ENCODE measurements at regions of chr2 and their contacts with region 1.

Region 1: DNA sequence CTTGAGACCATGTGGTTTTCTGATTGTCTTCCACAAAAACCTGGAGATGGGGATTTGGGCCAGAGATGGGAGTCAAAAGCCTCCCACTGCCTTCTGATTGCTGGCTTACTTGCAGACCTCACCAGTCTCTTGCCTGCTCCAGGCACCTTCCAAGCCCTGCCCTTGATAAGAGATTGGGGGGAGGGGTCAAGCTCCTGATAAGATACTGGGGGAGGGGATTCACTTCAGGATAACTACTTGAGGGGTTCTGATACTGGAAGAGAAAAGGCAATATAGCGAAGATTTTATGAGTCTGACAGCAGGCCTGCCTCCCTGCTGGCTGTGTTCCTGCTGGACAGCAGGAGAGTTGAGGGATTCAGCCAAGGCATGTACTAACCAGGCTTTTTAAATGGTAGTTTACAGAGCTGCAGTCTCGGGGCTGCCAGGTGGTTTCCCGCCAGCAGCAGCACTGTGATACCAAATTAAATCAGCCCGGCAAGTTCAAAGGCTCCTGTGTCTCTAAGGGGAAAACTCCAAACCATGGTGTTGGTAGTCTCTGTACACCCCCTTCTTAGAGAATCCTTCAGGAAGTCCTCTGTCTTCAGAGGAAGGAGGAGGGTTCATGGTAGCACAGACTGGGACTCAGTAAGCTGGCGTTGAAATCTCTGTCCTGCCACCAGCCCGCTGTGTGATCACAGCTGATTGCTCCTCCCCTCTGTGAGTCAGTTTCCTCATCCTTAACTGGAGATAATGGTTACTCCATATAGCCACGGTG is 58.3 kb downstream of the FBXO36 start:
- DNase-seq: no peak
- H3K4me3 ChIP-seq: peak overlapping the region; percentile 7 to 31 (median 21)
- H3K27ac ChIP-seq: peak overlapping the region; percentile 58 to 72 (median 66)
- H3K4me1 ChIP-seq: peaks cover 5 to 22% (median 18%) of the 10 kb centered on the region in 4 donors
- H3K27me3 ChIP-seq: no peaks in the 10 kb centered on the region
- CTCF ChIP-seq: peak in 1 of 3 experiments; percentile 5
- EP300 ChIP-seq: no peak
- POLR2A ChIP-seq: no peak

Region 2: DNA sequence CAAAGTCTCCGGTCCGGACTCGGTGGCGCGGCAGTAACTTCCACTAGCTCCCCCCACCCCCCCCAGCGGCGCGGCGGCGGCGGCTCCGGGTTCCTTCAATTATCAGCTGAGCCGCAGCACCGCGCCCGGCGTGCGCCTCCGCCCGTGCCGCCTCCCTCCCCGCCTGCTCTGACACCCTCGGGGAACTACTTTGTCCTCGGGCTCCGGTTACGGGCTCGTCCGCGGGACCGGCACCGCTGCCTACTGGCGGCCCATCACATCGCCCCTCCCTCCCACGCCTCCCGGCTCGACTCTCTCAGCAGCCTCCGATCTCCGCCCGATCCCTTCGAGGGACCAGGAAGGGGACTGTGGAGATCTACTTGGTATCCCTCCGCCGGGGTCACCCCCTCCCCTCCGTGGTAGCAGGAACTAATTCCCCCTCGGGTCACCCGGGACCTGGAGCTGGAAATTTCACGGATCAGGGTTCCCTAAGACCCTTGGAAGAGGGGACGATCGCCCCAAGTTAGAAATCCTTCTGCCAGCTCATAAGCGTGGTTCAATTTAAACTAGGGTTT is 58.6 kb before region 1 on chr2 and contains the start of gene TRIP12:
- intact Hi-C with region 1: loop called (anchors 5 kb)
- DNase-seq: peak; percentile 98
- H3K4me3 ChIP-seq: peak within 1 kb of the TSS; percentile 84 to 96 (median 90)
- H3K27ac ChIP-seq: peak within 1 kb of the TSS; percentile 97 to 100 (median 99)
- H3K4me1 ChIP-seq: peaks cover 27 to 47% (median 41%) of the 10 kb centered on the region in 4 donors
- H3K27me3 ChIP-seq: no peaks in the 10 kb centered on the region
- CTCF ChIP-seq: no peak
- EP300 ChIP-seq: no peak
- POLR2A ChIP-seq: peak; percentile 13
- total RNA-seq, gene TRIP12: 156 to 182 (median 168) TPM

Measured in esophagus muscularis mucosa (tissue), 4 donors.